ENCODE measurements at regions of chr18 and their contacts with region 1.

Region 1: DNA sequence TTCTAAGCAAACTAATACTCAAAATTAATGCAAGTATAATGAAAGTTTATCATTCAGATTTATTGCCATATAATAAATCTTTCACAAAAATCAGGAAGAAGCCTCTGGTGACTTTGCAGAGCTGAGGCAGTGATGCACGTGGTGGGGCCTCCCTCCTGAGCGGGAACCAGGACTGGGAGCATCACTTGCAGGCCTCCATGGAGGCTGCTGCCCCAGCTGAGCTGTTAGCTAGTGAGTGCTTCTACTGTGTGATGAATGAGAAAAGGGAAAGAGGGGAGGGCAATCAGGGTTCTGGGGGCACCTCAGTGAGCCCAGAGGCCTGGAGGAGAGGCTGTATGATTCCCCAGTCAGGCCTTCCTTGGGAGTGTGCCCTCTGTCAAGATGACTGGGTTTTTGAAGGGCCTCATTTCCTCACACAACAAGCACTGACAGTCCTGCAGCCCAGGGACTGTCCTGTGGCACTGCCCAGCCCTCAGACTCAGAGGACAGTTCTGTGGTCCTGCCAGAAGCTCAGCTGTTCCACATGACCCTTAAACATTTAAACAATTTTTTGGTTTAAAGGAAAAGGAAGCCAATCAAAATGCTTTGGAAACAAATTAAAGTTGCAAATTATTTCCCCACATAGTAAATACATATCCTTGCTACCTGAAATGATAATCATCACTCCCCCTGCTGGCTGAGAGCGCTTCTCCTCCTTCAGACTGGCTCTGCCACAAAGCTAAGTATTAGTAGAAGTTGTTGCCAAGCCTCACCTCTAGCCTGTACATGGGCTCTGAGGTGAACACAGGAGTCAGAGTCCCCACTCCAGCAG is 90.9 kb upstream of the SMAD7 start:
- DNase-seq: peak; percentile 52
- H3K4me3 ChIP-seq: no peak overlapping the region
- H3K27ac ChIP-seq: no peak overlapping the region
- H3K4me1 ChIP-seq: no peaks in the 10 kb centered on the region
- H3K27me3 ChIP-seq: no peaks in the 10 kb centered on the region
- CTCF ChIP-seq: peak; percentile 45 to 53
- POLR2A ChIP-seq: no peak

Region 2: GRCh38 chr18:48446582-48447225 is 594.9 kb before region 1 on chr18:
- CTCF ChIA-PET with region 1: no interaction called
- POLR2A ChIA-PET with region 1: no interaction called
- dilution Hi-C with region 1: no loop called
- intact Hi-C with region 1: no loop called
- DNase-seq: peak; percentile 57
- H3K4me3 ChIP-seq: no peak overlapping the region
- H3K27ac ChIP-seq: no peak overlapping the region
- H3K4me1 ChIP-seq: no peaks in the 10 kb centered on the region
- H3K27me3 ChIP-seq: peaks cover 22 to 27% of the 10 kb centered on the region in 2 experiments
- CTCF ChIP-seq: peak; percentile 86 to 97
- POLR2A ChIP-seq: no peak

Region 3: DNA sequence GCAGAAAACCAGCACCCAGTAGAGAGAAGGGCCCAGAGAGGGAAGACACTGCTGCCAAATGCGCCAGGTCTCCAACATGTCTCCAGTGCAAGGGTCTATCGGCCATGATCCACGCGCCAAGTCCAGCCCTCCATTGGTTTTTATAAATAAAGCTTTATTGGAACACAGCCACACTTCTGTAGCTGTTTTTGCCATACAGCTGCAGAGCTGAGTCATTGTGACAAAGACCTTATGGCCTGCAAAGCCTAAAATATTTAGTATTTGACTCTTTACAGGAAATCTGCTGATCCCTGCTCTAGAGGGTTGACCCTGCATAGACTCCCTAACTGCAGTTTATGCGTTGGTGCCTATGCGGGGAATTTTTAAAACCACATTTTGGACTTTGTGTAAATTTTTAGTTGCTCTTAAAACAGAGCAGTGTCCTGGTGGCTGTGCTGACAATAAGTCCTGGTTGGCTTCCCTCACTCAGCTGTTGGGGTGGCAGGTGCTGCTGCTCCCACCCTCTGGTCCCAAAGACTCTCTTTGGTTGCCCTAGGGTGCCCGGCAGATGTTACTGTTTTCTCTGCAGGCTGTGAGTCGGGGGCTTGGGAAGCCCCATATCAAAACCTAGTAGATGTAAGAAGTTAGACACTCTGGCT is 347.9 kb before region 1 on chr18:
- CTCF ChIA-PET with region 1: no interaction called
- POLR2A ChIA-PET with region 1: no interaction called
- dilution Hi-C with region 1: no loop called
- intact Hi-C with region 1: no loop called
- DNase-seq: no peak
- H3K4me3 ChIP-seq: no peak overlapping the region
- H3K27ac ChIP-seq: peak overlapping the region; percentile 12
- H3K4me1 ChIP-seq: peaks cover 22% of the 10 kb centered on the region
- H3K27me3 ChIP-seq: no peaks in the 10 kb centered on the region
- CTCF ChIP-seq: no peak
- POLR2A ChIP-seq: no peak

Region 4: GRCh38 chr18:49055754-49056172 is 14.1 kb after region 1 on chr18:
- CTCF ChIA-PET with region 1: interaction called, 10 read pairs
- POLR2A ChIA-PET with region 1: no interaction called
- dilution Hi-C with region 1: no loop called
- intact Hi-C with region 1: no loop called
- DNase-seq: peak; percentile 36
- H3K4me3 ChIP-seq: no peak overlapping the region
- H3K27ac ChIP-seq: peak overlapping the region; percentile 31
- H3K4me1 ChIP-seq: peaks cover 5% of the 10 kb centered on the region
- H3K27me3 ChIP-seq: no peaks in the 10 kb centered on the region
- CTCF ChIP-seq: no peak
- POLR2A ChIP-seq: no peak

Measured in endothelial cell of umbilical vein (primary cell).